Right ventricle myocardium superior (tissue), 1 donor: ENCODE measurements at regions of chr22 and their contacts with region 1.

Region 1: GRCh38 chr22:33519071-33519973 is 401.0 kb downstream of the LARGE1 start:
- DNase-seq: no peak
- ATAC-seq: peak; percentile 73

Region 2: DNA sequence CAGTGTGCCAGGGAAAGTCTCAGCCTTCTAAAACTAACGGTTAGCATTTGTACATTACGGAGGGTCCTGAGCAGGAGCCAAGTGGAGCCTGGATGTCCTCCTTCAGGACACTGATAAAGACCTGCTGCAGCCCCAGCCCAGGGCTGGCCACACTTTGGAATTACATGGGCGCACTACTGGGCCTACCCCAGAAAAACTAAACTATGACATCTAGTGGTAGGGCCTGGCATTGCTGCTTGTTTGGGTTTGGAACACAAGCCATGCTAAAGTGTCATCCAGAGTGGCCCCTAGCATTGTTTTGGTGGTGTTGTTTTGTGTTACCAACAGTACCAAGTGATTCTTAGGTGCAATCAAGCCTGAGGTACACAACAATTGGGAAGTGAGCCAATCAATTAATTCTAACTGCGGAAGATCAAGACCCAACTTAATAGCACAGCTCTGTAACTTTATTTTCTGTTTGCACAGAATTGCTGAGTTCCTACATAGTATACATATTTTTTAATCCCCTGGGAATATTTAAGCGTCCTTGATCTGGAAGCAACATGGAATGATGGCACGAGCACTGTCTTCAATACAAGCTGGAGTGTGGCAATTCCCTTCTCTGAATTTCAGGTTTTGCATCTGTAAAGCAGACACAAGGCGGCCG is 60.2 kb after region 1 on chr22:
- intact Hi-C with region 1: loop called (anchors 1 kb)
- DNase-seq: peak; percentile 72
- ATAC-seq: peak; percentile 90

Region 3: GRCh38 chr22:33635766-33636165 is 116.4 kb after region 1 on chr22:
- intact Hi-C with region 1: no loop called
- DNase-seq: no peak
- ATAC-seq: no peak

Region 4: DNA sequence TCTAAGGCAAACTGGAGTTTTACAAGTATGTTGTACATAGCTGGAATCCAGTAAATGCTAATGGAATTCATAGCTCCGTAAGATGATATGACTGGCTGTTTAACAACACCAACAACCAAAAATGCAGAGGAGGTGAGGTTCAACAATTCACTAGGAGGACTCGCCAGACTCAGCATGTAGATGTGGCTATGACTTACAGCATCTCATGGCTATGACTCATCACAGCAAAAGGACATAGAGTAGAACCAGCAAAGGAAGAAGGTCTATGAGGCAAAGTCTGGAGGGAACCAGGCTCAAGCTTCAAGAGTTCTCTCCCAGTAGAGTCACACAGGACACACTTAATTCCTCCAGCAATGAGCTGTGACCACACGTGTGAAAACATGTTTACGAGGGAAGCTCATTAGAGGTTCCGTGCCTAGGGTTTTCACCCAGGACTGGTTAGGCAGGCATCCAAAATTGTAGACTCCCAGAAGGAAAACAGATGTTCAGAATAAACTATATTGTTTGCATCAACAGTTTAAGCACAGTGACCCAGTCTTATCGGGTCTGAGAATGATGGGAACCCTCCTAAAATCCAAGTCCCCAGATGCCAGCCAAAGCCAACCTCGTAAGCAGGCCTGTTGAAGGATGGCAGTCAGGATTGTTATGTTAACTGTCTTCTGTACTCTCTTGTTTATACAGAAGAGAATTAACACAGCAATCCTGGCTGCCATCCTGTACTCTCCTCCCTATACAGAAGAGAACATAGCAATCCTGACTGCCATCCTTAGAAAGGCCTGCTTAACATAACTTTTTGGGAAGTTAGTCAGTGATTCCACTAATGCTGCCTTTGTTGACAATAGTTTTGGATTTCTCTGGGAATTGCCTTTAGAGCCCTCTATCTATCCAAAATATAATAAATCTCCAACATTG is 284.3 kb after region 1 on chr22:
- intact Hi-C with region 1: no loop called
- DNase-seq: no peak
- ATAC-seq: peak; percentile 15